ENCODE measurements at regions of chr15 and their contacts with region 1.

Region 1: DNA sequence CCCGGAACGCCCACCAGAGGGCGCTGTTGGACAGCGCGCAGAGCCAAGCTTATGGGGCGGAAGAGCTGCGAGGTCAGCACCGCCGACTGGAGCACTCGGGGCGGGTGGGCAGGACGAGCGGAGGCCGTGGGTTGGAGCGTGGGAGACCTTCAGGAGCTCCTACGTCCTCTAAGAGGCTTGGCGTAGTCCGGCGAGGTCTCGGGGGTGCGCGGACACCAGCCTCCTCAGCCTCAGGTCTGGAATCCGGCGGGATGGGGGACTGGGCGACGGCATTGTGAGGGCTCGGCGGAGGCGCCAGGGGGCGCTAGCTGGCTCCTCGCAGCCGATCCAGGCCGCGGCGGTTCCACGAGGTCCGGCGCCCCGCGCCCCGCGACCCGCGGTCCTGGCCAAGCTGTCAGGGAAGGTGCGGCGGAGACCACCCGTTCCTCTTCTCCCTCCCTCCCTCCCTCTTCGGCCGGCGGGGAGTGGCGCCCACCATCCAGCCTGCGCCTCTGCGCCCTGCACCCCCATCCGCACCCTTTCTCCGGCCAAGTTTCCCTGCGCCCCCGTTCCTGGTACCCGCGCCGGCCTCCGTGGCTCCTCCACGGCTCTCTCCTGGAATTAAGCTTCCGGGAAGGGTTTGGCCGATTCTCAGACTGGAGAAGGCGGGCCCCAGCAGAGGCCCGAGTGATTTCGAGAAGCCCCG is 24.3 kb upstream of the POLG start:
- DNase-seq: peak; percentile 92
- ATAC-seq: peak; percentile 94
- H3K4me3 ChIP-seq: peak overlapping the region in 4 of 5 experiments; percentile 41 to 63 (median 52)
- H3K4me3 Mint-ChIP-seq: peak overlapping the region; percentile 88
- H3K27ac ChIP-seq: no peak overlapping the region
- H3K27ac Mint-ChIP-seq: peak overlapping the region; percentile 46
- H3K4me1 ChIP-seq: peaks cover 26 to 41% of the 10 kb centered on the region in 2 donors
- H3K4me1 Mint-ChIP-seq: peaks cover 16% of the 10 kb centered on the region
- H3K27me3 ChIP-seq: peaks cover 0 to 83% (median 56%) of the 10 kb centered on the region in 4 experiments
- H3K27me3 Mint-ChIP-seq: peaks cover 70% of the 10 kb centered on the region
- CTCF ChIP-seq: peak; percentile 99

Region 2: GRCh38 chr15:88974392-88974791 is 384.5 kb before region 1 on chr15:
- CTCF ChIA-PET with region 1: no interaction called
- POLR2A ChIA-PET with region 1: no interaction called
- intact Hi-C with region 1: no loop called
- DNase-seq: no peak
- ATAC-seq: no peak
- H3K4me3 ChIP-seq: no peak overlapping the region
- H3K4me3 Mint-ChIP-seq: no peak overlapping the region
- H3K27ac ChIP-seq: no peak overlapping the region
- H3K27ac Mint-ChIP-seq: no peak overlapping the region
- H3K4me1 ChIP-seq: no peaks in the 10 kb centered on the region
- H3K4me1 Mint-ChIP-seq: no peaks in the 10 kb centered on the region
- H3K27me3 ChIP-seq: peaks cover 0 to 5% (median 0%) of the 10 kb centered on the region in 4 experiments
- H3K27me3 Mint-ChIP-seq: peaks cover 28% of the 10 kb centered on the region
- CTCF ChIP-seq: no peak

Region 3: DNA sequence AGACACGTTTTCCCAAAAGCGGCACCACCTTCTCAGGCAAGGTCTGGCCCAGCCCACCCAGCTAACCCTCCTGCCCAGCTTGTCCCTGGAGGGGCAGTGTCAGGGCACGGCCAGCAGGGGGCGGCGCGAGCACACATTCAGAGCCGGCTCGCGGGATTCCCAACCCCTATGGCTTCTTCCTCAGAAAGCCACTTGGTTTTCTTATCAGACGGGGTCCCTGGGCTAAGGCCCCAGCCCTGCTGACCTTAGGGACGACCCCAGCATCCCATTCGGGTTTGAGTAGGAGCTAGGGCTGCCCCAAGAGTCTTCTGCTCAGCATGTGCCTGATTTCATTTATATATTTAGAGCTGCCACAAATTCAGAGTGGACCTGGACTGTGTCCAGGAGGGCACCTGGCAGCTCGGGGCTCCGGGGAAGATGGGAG is 152.0 kb before region 1 on chr15:
- CTCF ChIA-PET with region 1: interaction called, 17 read pairs
- POLR2A ChIA-PET with region 1: no interaction called
- intact Hi-C with region 1: no loop called
- DNase-seq: peak; percentile 71
- ATAC-seq: peak; percentile 90
- H3K4me3 ChIP-seq: no peak overlapping the region
- H3K4me3 Mint-ChIP-seq: no peak overlapping the region
- H3K27ac ChIP-seq: no peak overlapping the region
- H3K27ac Mint-ChIP-seq: no peak overlapping the region
- H3K4me1 ChIP-seq: peaks cover 3% of the 10 kb centered on the region in 2 donors
- H3K4me1 Mint-ChIP-seq: peaks cover 9% of the 10 kb centered on the region
- H3K27me3 ChIP-seq: no peaks in the 10 kb centered on the region
- H3K27me3 Mint-ChIP-seq: peaks cover 4% of the 10 kb centered on the region
- CTCF ChIP-seq: peak; percentile 100

Region 4: GRCh38 chr15:89341316-89342005 is 17.4 kb before region 1 on chr15:
- CTCF ChIA-PET with region 1: interaction called, 26 read pairs
- POLR2A ChIA-PET with region 1: no interaction called
- intact Hi-C with region 1: no loop called
- DNase-seq: no peak
- ATAC-seq: no peak
- H3K4me3 ChIP-seq: no peak overlapping the region
- H3K4me3 Mint-ChIP-seq: no peak overlapping the region
- H3K27ac ChIP-seq: no peak overlapping the region
- H3K27ac Mint-ChIP-seq: no peak overlapping the region
- H3K4me1 ChIP-seq: no peaks in the 10 kb centered on the region
- H3K4me1 Mint-ChIP-seq: peaks cover 1% of the 10 kb centered on the region
- H3K27me3 ChIP-seq: peaks cover 0 to 5% (median 0%) of the 10 kb centered on the region in 4 experiments
- H3K27me3 Mint-ChIP-seq: peaks cover 12% of the 10 kb centered on the region
- CTCF ChIP-seq: no peak

Region 5: GRCh38 chr15:89383365-89384175 is 24.7 kb after region 1 on chr15:
- CTCF ChIA-PET with region 1: interaction called, 39 read pairs
- POLR2A ChIA-PET with region 1: no interaction called
- intact Hi-C with region 1: no loop called
- DNase-seq: no peak
- ATAC-seq: no peak
- H3K4me3 ChIP-seq: no peak overlapping the region
- H3K4me3 Mint-ChIP-seq: no peak overlapping the region
- H3K27ac ChIP-seq: no peak overlapping the region
- H3K27ac Mint-ChIP-seq: no peak overlapping the region
- H3K4me1 ChIP-seq: peaks cover 8 to 14% of the 10 kb centered on the region in 2 donors
- H3K4me1 Mint-ChIP-seq: peaks cover 2% of the 10 kb centered on the region
- H3K27me3 ChIP-seq: peaks cover 0 to 37% (median 25%) of the 10 kb centered on the region in 4 experiments
- H3K27me3 Mint-ChIP-seq: peaks cover 28% of the 10 kb centered on the region
- CTCF ChIP-seq: no peak

Region 6: GRCh38 chr15:89416141-89416853 is 57.4 kb after region 1 on chr15:
- CTCF ChIA-PET with region 1: interaction called, 50 read pairs
- POLR2A ChIA-PET with region 1: no interaction called
- intact Hi-C with region 1: no loop called
- DNase-seq: peak; percentile 86
- ATAC-seq: peak; percentile 89
- H3K4me3 ChIP-seq: no peak overlapping the region
- H3K4me3 Mint-ChIP-seq: peak overlapping the region; percentile 14
- H3K27ac ChIP-seq: no peak overlapping the region
- H3K27ac Mint-ChIP-seq: peak overlapping the region; percentile 24
- H3K4me1 ChIP-seq: peaks cover 25 to 43% of the 10 kb centered on the region in 2 donors
- H3K4me1 Mint-ChIP-seq: peaks cover 15% of the 10 kb centered on the region
- H3K27me3 ChIP-seq: peaks cover 0 to 88% (median 57%) of the 10 kb centered on the region in 4 experiments
- H3K27me3 Mint-ChIP-seq: peaks cover 82% of the 10 kb centered on the region
- CTCF ChIP-seq: peak; percentile 94

Region 7: DNA sequence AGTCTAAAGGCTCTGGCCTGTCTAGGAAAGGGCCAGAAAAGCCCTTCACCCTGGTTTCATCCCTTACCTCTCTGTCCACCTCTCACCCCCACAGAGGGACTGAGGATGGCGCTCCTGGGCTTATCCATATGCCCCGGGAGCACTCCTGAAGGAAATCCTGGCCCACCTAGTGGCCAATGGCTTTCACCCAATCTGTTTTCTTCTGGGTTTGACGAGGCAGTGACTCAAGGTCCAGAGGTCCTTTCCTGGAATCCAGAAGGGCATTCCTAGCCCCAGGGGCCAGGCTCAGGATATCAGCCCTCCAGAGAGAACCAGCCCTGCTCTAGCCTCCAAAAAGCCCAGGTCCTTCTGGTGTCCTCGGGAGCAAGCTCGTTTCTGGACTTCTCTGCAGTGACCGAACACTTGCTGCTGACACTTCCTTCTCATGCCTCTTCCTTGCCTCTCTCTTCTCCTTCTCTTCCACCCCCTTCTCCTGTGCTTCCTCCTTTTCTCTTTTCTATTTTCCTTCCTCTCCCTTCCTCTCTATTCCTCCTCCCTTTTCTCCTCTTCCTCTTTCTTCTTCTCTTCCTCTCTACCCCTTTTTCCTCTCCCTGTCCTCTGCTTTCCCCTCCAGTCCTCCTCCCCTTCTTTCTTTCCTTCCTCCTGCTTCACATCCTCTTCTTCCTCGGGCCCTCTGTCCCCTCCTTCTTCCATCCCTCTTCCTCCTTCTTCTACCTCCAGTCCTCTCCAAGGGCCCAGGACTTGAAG is 77.8 kb after region 1 on chr15:
- CTCF ChIA-PET with region 1: interaction called, 126 read pairs
- POLR2A ChIA-PET with region 1: no interaction called
- intact Hi-C with region 1: no loop called
- DNase-seq: no peak
- ATAC-seq: no peak
- H3K4me3 ChIP-seq: no peak overlapping the region
- H3K4me3 Mint-ChIP-seq: no peak overlapping the region
- H3K27ac ChIP-seq: no peak overlapping the region
- H3K27ac Mint-ChIP-seq: no peak overlapping the region
- H3K4me1 ChIP-seq: peaks cover 7 to 16% of the 10 kb centered on the region in 2 donors
- H3K4me1 Mint-ChIP-seq: peaks cover 14% of the 10 kb centered on the region
- H3K27me3 ChIP-seq: peaks cover 0 to 19% (median 1%) of the 10 kb centered on the region in 4 experiments
- H3K27me3 Mint-ChIP-seq: peaks cover 9% of the 10 kb centered on the region
- CTCF ChIP-seq: no peak

Region 8: GRCh38 chr15:89472785-89473256 is 113.9 kb after region 1 on chr15:
- CTCF ChIA-PET with region 1: interaction called, 129 read pairs
- POLR2A ChIA-PET with region 1: no interaction called
- intact Hi-C with region 1: no loop called
- DNase-seq: peak; percentile 80
- ATAC-seq: peak; percentile 81
- H3K4me3 ChIP-seq: no peak overlapping the region
- H3K4me3 Mint-ChIP-seq: no peak overlapping the region
- H3K27ac ChIP-seq: no peak overlapping the region
- H3K27ac Mint-ChIP-seq: no peak overlapping the region
- H3K4me1 ChIP-seq: peaks cover 0 to 5% of the 10 kb centered on the region in 2 donors
- H3K4me1 Mint-ChIP-seq: no peaks in the 10 kb centered on the region
- H3K27me3 ChIP-seq: peaks cover 0 to 52% (median 19%) of the 10 kb centered on the region in 4 experiments
- H3K27me3 Mint-ChIP-seq: peaks cover 28% of the 10 kb centered on the region
- CTCF ChIP-seq: peak; percentile 89

Measured in B cell (primary cell).